Dorsolateral prefrontal cortex (tissue), 120 donors: ENCODE measurements at regions of chr3 and their contacts with region 1.

Region 1: DNA sequence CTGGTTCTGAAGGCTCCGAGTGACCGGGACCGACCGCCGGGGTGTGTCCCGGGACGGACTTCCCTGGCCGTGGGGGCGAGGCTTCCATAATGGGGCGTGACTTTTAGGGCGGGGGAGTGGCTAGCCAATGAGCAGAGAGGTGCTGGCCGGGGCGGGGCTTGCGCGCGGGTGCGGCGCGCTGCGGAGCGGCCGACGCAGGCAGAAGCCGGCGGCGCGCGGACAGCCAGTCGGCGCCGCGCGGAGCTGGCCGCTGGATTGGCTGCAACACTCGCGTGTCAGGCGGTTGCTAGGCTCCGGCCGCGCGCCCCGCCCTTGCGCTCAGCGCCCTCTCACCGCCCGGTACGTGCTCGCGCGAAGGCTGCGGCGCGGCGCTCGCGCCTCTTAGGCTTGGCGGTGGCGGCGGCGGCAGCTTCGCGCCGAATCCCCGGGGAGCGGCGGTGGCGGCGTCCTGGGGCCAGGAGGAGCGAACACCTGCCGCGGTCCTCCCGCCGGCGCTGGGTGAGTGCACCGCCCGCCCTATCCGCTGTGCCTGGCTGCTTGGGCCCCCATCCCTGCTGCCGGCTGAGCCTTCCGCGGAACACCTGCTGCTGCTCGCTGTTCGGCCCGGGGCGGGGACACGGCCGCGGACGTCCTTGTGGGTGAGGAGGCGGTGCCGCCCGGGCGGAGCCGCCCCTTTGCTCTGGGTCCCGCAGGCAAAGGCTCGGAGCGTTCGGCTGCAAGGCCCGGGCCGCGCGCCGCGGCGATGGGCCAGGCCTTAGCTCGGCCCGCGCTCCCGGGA is at the start of gene DAG1:
- DNase-seq: peak; percentile 90 to 97 (median 96)
- H3K4me3 ChIP-seq: peak within 1 kb of the TSS; percentile 72 to 98 (median 87)
- H3K27ac ChIP-seq: peak within 1 kb of the TSS; percentile 86 to 99 (median 96)
- H3K27me3 ChIP-seq: no peaks in the 10 kb centered on the region
- CTCF ChIP-seq: peak in 11 of 56 donors; percentile 7 to 46 (median 17)
- total RNA-seq, gene DAG1: 41.2 to 99.6 (median 56.6) TPM

Region 2: GRCh38 chr3:49377483-49377882 is 92.6 kb before region 1 on chr3:
- intact Hi-C with region 1: no loop called
- DNase-seq: no peak
- H3K4me3 ChIP-seq: no peak overlapping the region
- H3K27ac ChIP-seq: no peak overlapping the region
- H3K27me3 ChIP-seq: no peaks in the 10 kb centered on the region
- CTCF ChIP-seq: no peak

Region 3: GRCh38 chr3:49519296-49519695 is 49.2 kb after region 1 on chr3:
- intact Hi-C with region 1: loop called in 1 of 2 experiments (anchors 5 kb)
- DNase-seq: peak in 9 of 10 donors; percentile 65 to 87 (median 74)
- H3K4me3 ChIP-seq: peak overlapping the region in 5 of 59 donors; percentile 1 to 16 (median 3)
- H3K27ac ChIP-seq: peak overlapping the region in 22 of 59 donors; percentile 0 to 64 (median 28)
- H3K27me3 ChIP-seq: no peaks in the 10 kb centered on the region
- CTCF ChIP-seq: peak in 6 of 56 donors; percentile 6 to 26 (median 18)

Region 4: DNA sequence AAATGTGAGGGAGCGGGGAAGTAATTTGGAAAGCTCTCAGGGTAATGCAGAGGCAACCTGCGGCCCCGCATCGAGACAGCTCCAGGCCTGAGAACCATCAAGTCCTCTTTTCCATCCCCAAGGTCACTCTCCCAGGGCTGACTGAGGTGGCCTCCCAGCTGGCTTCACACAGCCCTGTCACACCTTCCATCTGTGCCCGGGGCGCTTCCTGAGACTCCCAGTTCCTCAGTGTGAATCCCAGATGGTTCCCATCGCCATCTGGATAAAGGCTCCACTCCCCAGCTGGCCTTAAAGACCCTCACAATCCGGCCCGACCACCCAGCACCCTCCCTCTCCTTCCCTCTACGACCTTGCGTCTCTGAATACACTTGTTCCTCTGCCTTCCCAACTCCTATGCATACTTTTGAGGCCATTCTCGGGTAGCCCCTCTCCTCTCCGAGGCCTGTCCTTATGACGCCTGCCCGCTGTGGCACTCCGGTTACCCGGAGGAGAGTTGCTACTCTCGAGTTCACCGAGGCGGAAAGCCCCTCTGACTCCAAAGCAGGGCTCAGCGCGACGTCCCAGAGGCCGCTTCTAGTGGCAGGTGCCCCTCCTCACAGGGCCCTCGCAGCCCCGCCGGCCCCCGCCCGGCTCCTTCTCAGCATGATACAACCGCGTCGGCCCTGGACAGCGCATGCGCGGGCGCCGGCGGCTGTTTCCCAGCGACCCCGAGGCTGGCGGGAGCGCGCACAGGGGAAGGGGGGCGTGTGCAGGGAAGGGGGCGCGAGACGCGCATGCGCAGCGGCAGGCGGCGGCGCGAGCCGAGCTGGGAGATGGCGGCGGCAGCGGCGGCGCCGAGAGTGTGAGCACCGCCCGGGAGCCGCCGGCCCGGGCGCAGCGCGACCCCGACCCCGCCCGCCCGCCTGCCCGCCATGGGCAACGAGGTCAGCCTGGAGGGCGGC is 83.8 kb after region 1 on chr3 and contains the start of gene BSN:
- intact Hi-C with region 1: loop called in 1 of 2 experiments (anchors 5 kb)
- DNase-seq: peak; percentile 82 to 92 (median 88)
- H3K4me3 ChIP-seq: peak within 1 kb of the TSS; percentile 66 to 95 (median 86)
- H3K27ac ChIP-seq: peak within 1 kb of the TSS in 58 of 59 donors; percentile 49 to 98 (median 86)
- H3K27me3 ChIP-seq: no peaks in the 10 kb centered on the region
- CTCF ChIP-seq: peak in 23 of 56 donors; percentile 9 to 40 (median 26)
- total RNA-seq, gene BSN: 47.8 to 218 (median 156) TPM